Activated CD4-positive, alpha-beta memory T cell treated with anti-CD3 and anti-CD28 coated beads for 36 hours (primary cell): ENCODE measurements at regions of chr1 and their contacts with region 1.

Region 1: DNA sequence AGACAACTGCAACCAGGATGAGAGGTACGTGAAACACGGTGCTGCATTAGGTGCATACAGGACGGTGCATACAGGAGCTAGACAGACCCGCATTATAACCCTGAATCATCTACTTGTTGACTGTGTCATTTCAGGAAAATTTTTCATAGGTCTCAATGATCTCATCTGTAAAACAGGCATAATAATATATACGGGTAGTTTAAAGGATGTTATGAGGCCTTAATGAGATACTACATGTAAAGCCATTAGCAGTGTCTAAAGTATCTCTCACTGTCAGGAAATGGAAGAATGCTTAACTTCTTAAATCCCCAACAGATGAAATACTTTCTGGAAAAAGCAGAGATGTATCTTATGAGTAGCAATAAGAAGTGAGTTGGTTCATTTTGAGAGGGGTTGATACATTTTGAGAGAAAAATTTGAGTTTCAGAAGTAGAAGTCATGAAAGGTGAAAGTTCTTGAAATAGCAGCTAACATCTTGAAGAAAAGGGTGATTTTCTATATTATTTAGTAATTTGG is 669.5 kb downstream of the PTPRC start:
- DNase-seq: no peak
- H3K4me3 Mint-ChIP-seq: no peak overlapping the region
- H3K27ac Mint-ChIP-seq: no peak overlapping the region
- H3K4me1 Mint-ChIP-seq: peaks cover 13% of the 10 kb centered on the region
- H3K27me3 Mint-ChIP-seq: peaks cover 41% of the 10 kb centered on the region

Region 2: GRCh38 chr1:199173356-199173755 is 135.0 kb before region 1 on chr1:
- CTCF ChIA-PET with region 1: no interaction called
- POLR2A ChIA-PET with region 1: no interaction called
- intact Hi-C with region 1: loop called (anchors 1 kb)
- DNase-seq: no peak
- H3K4me3 Mint-ChIP-seq: no peak overlapping the region
- H3K27ac Mint-ChIP-seq: no peak overlapping the region
- H3K4me1 Mint-ChIP-seq: peaks cover 49% of the 10 kb centered on the region
- H3K27me3 Mint-ChIP-seq: no peaks in the 10 kb centered on the region

Region 3: GRCh38 chr1:199272643-199273086 is 35.7 kb before region 1 on chr1:
- CTCF ChIA-PET with region 1: no interaction called
- POLR2A ChIA-PET with region 1: no interaction called
- intact Hi-C with region 1: no loop called
- DNase-seq: no peak
- H3K4me3 Mint-ChIP-seq: no peak overlapping the region
- H3K27ac Mint-ChIP-seq: no peak overlapping the region
- H3K4me1 Mint-ChIP-seq: peaks cover 5% of the 10 kb centered on the region
- H3K27me3 Mint-ChIP-seq: no peaks in the 10 kb centered on the region